ENCODE measurements at regions of chr12 and their contacts with region 1.

Region 1: DNA sequence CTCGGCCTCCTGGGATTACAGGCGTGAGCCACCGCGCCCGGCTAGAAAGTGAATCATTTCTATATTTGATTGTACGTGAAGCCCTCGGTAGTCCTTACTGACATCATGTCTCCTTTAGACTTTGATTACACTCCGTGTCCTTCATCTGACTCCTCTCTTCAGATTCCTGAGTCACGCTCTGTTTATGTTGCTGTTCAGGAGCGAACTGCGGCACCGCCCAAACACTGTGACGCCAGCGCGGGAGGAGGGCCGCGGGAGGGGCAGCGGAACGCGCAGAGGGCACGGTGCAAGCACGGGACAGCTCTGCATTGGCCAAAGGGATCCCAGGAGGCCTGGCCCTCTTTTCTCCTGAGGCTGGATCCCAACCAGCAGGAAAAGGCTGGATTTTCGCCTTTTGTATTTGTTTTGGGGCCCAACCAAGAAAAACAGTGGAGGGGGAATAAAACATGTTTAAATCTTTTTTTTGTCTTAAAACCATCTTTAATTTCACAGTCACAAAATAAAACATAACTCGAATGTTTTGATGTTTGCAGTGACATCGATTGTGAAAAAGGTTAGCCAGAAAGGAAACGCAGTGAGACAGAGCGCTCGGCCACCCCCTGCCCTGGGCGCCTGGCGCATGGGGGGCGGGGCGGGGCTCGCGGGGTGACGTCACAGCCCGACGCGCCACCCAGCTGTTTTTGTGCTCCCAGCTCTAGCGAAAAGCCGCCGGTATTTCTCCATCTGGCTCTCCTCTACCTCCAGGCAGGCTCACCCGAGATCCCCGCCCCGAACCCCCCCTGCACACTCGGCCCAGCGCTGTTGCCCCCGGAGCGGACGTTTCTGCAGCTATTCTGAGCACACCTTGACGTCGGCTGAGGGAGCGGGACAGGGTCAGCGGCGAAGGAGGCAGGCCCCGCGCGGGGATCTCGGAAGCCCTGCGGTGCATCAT is at the start of gene GABARAPL1:
- DNase-seq: peak; percentile 95
- H3K4me3 Mint-ChIP-seq: peak within 1 kb of the TSS; percentile 94
- H3K27ac Mint-ChIP-seq: peak within 1 kb of the TSS; percentile 93
- H3K4me1 Mint-ChIP-seq: peaks cover 26% of the 10 kb centered on the region
- H3K27me3 Mint-ChIP-seq: peaks cover 30% of the 10 kb centered on the region
- total RNA-seq, gene GABARAPL1: 1.5 and 2.6 TPM in 2 replicates

Region 2: DNA sequence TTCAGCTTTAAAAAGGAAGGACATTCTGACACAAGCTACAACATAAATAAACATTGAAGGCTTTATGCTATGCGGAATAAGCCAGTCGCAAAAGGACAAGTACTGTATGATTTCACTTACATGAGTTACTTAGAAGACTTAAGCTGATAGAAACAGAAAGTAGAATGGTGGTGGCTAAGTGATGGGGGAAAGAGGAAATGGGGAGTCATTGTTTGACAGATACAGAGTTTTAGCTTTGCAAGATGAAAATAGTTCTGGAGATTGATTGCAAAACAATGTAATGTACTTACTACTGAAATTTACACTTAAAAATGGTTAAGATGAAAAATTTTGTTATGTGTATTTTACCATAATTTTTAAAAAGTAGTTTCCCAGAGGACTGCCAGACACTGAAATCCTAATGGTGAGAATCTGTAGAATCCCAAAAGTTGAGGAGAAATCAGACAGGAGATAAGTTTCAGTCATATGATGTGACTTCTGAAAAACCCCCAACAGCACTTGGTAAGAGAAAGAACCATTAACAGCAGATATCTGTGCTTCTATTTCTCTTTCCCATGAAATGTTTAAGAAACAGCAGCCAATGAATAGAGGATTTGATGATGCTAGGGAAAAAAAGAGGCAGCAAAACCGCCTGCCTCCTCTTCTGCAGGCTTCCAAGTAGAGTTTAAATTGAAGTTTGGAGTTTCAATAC is 263.7 kb before region 1 on chr12:
- intact Hi-C with region 1: loop called (anchors 2 kb)
- DNase-seq: peak; percentile 78
- H3K4me3 Mint-ChIP-seq: peak overlapping the region; percentile 27
- H3K27ac Mint-ChIP-seq: peak overlapping the region; percentile 52
- H3K4me1 Mint-ChIP-seq: peaks cover 52% of the 10 kb centered on the region
- H3K27me3 Mint-ChIP-seq: no peaks in the 10 kb centered on the region

Region 3: GRCh38 chr12:10196210-10196609 is 16.3 kb before region 1 on chr12:
- intact Hi-C with region 1: no loop called
- DNase-seq: no peak
- H3K4me3 Mint-ChIP-seq: no peak overlapping the region
- H3K27ac Mint-ChIP-seq: no peak overlapping the region
- H3K4me1 Mint-ChIP-seq: no peaks in the 10 kb centered on the region
- H3K27me3 Mint-ChIP-seq: peaks cover 18% of the 10 kb centered on the region

Region 4: DNA sequence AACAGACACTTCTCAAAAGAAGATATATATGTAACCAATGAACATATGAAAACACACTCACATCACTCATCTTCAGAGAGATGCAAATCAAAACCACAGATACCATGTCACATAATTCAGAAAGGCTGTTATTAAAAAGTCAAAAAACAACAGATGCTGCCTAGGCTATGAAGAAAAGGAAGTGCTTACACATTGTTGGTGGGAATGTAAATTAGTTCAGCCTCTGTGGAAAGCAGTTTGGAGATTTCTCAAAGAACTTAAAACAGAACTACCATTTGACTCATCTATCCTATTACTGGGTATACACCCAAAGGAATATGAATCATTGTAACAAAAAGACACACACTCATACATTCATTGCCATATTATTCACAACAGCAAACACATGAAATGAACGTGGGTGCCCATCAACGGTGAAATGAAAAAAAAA is 328.3 kb after region 1 on chr12:
- intact Hi-C with region 1: loop called (anchors 1 kb)
- DNase-seq: no peak
- H3K4me3 Mint-ChIP-seq: no peak overlapping the region
- H3K27ac Mint-ChIP-seq: no peak overlapping the region
- H3K4me1 Mint-ChIP-seq: peaks cover 7% of the 10 kb centered on the region
- H3K27me3 Mint-ChIP-seq: peaks cover 36% of the 10 kb centered on the region

Region 5: DNA sequence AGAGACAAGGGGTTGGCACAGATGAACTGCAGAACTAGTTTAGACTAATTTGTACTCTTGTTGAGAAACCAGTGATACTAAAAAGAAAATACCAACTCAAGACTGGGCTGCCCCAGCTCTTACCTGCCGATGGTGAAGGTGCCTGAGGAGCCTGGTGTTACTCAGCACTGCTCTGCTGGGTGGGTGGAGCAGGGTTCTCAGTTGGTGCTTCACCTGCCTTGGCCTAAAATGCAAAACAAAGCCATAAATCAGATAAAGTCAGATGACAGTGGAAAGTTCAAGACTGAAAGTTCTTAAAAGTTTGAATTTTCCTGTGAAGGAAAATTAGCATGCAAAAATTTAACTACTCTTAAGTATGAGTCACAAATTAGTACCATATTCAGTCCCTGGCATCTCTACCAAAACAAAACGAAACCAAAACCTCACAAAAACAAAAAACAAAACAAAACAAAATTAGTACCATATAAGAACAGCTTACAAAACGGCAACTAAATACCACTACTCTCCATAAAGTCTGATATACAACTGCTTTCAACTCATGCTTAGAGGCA is 488.7 kb after region 1 on chr12:
- intact Hi-C with region 1: loop called (anchors 1 kb)
- DNase-seq: peak; percentile 73
- H3K4me3 Mint-ChIP-seq: peak overlapping the region; percentile 8
- H3K27ac Mint-ChIP-seq: peak overlapping the region; percentile 26
- H3K4me1 Mint-ChIP-seq: peaks cover 15% of the 10 kb centered on the region
- H3K27me3 Mint-ChIP-seq: no peaks in the 10 kb centered on the region

Region 6: DNA sequence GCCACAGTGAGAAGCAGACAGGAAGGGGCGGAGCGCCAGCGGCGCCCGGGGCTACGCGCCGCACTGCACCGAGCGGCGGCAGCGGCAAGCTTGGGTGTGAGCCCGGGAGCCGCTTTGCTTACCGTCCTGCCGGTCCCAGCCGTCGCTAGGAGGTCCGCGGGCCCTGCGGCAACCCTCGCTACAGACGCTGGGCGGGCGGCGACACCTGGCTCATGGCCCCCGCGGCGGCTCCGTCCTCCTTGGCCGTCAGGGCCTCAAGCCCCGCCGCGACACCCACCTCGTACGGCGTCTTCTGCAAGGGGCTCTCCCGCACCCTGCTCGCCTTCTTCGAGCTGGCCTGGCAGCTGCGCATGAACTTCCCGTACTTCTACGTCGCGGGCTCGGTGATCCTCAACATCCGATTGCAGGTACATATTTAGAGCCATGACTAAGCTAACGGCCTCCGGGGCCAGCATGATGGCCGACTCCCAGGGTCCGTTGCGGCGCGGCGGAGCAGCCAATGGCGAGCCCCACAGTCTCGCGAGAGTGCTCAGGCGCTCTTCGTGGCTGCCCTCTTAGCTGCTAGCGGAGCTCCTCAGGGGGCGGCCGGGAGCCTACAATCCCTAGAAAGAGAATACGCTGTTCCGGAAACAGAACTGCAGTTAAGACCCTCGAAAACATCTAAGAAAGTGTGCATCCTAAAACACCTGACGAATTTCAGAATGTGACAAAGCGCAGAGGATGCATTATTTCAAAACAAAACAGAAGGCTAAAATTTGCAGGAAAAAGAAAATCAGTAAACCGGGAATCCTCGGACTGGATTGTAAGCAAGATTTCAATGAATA is 958.9 kb after region 1 on chr12 and contains the start of gene SMIM10L1:
- intact Hi-C with region 1: loop called (anchors 10 kb)
- DNase-seq: peak; percentile 97
- H3K4me3 Mint-ChIP-seq: peak within 1 kb of the TSS; percentile 98
- H3K27ac Mint-ChIP-seq: peak within 1 kb of the TSS; percentile 98
- H3K4me1 Mint-ChIP-seq: peaks cover 49% of the 10 kb centered on the region
- H3K27me3 Mint-ChIP-seq: no peaks in the 10 kb centered on the region
- total RNA-seq, gene SMIM10L1: 9.5 and 10.1 TPM in 2 replicates